ENCODE measurements at regions of chr2 and their contacts with region 1.

Region 1: GRCh38 chr2:202831242-202832220 is 40.0 kb downstream of the ICA1L start:
- DNase-seq: peak; percentile 61
- ATAC-seq: peak; percentile 97
- H3K4me3 ChIP-seq: no peak overlapping the region
- H3K27ac ChIP-seq: no peak overlapping the region
- H3K4me1 ChIP-seq: peaks cover 5% of the 10 kb centered on the region; the same call in 1 of the 2 replicates
- H3K27me3 ChIP-seq: no peaks in the 10 kb centered on the region
- CTCF ChIP-seq: peak; percentile 70 to 84 (median 71)
- EP300 ChIP-seq: no peak
- POLR2A ChIP-seq: no peak
- RAD21 ChIP-seq: peak; percentile 90

Region 2: DNA sequence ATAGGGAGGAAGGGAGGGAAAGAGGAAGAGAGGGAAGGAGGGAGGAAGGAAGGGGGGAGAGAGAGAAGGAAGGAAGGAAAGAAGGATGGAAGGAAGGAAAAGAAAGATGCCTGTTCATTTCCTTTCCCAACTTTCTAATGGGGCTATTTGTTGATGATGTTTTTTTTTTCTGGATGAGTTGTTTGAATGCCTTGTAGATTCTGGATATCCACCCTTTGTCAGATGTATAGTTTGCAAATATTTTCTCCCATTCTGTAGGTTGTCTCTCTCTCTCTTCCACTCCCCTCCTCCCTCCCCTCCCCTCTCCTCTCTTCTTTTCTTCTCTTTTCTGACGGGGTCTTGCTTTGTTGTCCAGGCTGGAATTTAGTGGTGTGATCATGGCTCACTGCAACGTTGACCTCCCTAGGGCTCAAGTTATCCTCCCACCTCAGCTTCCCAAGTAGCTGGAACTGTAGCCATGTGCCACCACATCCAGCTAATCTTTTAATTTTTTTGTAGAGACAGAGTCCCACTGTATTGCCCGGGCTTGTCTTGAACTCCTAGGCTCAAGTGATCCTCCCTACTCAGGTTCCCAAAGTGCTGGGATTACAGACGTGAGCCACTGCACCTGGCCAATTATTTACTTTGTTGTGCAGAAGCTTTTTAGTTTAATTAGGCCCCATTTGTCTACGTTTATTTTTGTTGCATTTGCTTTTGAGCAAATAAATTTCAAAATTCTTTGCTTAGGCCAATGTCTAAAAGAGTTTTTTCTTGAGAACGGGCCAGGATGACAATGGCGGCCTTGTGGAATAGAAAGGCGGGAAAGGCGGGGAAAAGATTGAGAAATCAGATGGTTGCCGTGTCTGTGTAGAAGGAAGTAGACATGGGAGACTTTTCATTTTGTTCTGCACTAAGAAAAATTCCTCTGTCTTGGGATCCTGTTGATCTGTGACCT is 254.0 kb before region 1 on chr2:
- CTCF ChIA-PET with region 1: interaction called, 4 read pairs
- POLR2A ChIA-PET with region 1: no interaction called
- RAD21 ChIA-PET with region 1: no interaction called
- SMC1A ChIA-PET with region 1: interaction called, 6 read pairs
- in situ Hi-C with region 1: no loop called
- intact Hi-C with region 1: loop called (anchors 5 kb)
- DNase-seq: no peak
- ATAC-seq: no peak
- H3K4me3 ChIP-seq: no peak overlapping the region
- H3K27ac ChIP-seq: no peak overlapping the region
- H3K4me1 ChIP-seq: no peaks in the 10 kb centered on the region
- H3K27me3 ChIP-seq: no peaks in the 10 kb centered on the region
- CTCF ChIP-seq: no peak
- EP300 ChIP-seq: no peak
- POLR2A ChIP-seq: no peak
- RAD21 ChIP-seq: no peak

Region 3: DNA sequence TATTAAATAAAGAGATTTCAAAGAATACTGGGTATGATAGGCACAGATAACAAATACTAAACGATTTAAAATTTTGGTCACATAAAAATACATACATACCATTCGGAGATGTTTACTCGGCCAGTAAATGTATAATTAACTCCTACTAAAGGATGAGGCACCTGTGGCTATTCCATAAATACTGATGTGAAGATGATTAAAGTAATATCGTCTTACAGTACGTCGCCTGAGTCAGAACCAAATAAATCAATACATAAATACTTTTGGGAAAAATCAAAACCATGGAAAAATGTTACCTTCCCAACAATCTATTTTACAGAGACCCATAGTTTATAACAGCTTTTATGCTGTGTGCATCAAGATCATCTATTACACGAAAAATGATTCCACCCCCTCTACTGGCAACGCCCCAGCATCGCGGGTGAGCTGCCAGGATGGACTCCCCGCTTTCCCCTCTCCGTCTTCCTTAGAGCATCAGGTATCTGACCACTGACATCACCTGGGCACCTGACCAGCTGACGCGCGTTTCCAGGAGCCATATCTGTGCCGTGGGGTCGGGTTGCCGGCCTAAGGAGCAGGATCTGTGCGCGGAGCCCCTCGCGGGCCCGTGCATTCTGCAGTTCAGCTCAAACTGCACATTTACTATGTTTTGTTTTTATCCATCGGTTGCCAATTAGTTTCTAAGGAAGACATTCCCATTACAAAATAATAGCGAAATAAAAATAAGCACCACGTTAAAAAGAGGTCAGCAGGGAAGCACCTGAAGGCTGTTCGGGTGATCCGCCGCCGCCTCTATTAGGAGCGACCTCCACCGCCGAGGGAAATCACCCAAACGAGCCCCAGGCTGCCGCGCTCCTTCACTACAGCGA is 39.1 kb after region 1 on chr2:
- CTCF ChIA-PET with region 1: interaction called, 8 read pairs
- POLR2A ChIA-PET with region 1: no interaction called
- RAD21 ChIA-PET with region 1: interaction called, 5 read pairs
- SMC1A ChIA-PET with region 1: interaction called, 9 read pairs
- in situ Hi-C with region 1: no loop called
- intact Hi-C with region 1: loop called (anchors 1 kb)
- DNase-seq: no peak
- ATAC-seq: peak; percentile 90
- H3K4me3 ChIP-seq: peak overlapping the region; percentile 81
- H3K27ac ChIP-seq: peak overlapping the region; percentile 67
- H3K4me1 ChIP-seq: no peaks in the 10 kb centered on the region
- H3K27me3 ChIP-seq: no peaks in the 10 kb centered on the region
- CTCF ChIP-seq: peak; percentile 71 to 75 (median 75)
- EP300 ChIP-seq: no peak
- POLR2A ChIP-seq: no peak
- RAD21 ChIP-seq: peak; percentile 74

Region 4: GRCh38 chr2:203155406-203155805 is 323.9 kb after region 1 on chr2:
- CTCF ChIA-PET with region 1: interaction called, 5 read pairs
- POLR2A ChIA-PET with region 1: no interaction called
- RAD21 ChIA-PET with region 1: interaction called, 4 read pairs
- SMC1A ChIA-PET with region 1: no interaction called
- in situ Hi-C with region 1: no loop called
- intact Hi-C with region 1: loop called (anchors 10 kb)
- DNase-seq: no peak
- ATAC-seq: peak; percentile 54
- H3K4me3 ChIP-seq: no peak overlapping the region
- H3K27ac ChIP-seq: no peak overlapping the region
- H3K4me1 ChIP-seq: no peaks in the 10 kb centered on the region
- H3K27me3 ChIP-seq: no peaks in the 10 kb centered on the region
- CTCF ChIP-seq: peak in 1 of 3 experiments; percentile 6; a peak in 1 of 6 replicates
- EP300 ChIP-seq: no peak
- POLR2A ChIP-seq: no peak
- RAD21 ChIP-seq: 0 out of 2 replicates have a peak, but pooled peaks have one; percentile 24

Region 5: DNA sequence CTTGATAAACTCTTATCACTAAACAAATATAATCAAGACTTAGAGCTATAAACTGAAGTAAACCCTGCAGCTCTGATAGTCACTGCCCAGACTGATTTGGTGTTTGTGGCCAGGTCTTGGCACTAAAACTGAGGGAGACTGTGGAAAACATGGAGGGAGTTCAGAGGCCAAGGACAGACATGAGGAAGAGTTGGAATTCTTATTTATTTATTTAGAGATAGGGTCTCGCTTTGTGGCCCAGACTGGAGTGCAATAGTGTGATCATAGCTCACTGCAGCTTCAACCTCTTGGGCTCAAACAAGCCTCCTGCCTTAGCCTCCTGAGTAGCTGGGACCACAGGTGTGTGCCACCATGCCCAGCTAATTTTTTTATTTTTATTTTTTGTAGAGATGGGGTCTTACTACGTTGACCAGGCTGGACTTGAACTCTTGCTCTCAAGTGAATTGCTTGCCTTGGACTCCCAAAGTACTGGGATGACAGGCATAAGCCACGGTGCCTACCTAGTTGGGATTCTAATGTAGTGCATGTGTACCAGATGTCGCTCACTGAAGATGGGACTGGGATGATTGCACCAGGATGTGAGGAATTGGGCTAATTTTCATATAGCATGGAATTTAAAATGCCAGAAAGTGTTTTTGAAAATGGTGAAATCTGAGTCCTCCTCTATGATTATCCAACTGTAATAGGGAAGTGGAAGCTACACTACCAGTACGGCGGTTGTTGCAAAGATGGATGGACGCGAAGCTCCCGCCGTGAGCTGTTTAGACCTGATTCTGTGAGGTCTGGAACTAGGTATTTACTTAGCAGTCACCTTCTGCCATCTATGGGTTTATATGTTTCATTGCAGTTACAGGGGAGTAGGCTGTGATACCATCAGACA is 983.4 kb after region 1 on chr2:
- CTCF ChIA-PET with region 1: no interaction called
- POLR2A ChIA-PET with region 1: no interaction called
- RAD21 ChIA-PET with region 1: no interaction called
- SMC1A ChIA-PET with region 1: no interaction called
- in situ Hi-C with region 1: no loop called
- intact Hi-C with region 1: loop called (anchors 10 kb)
- DNase-seq: no peak
- ATAC-seq: peak; percentile 91
- H3K4me3 ChIP-seq: no peak overlapping the region
- H3K27ac ChIP-seq: no peak overlapping the region
- H3K4me1 ChIP-seq: peaks cover 6% of the 10 kb centered on the region
- H3K27me3 ChIP-seq: peaks cover 0 to under 1% of the 10 kb centered on the region in 2 experiments; a peak in 1 of 4 replicates
- CTCF ChIP-seq: peak; percentile 55 to 80 (median 66); a peak in 5 of 6 replicates
- EP300 ChIP-seq: no peak
- POLR2A ChIP-seq: no peak
- RAD21 ChIP-seq: peak; percentile 89

Measured in GM12878 (cell line).